Activated CD4-positive, alpha-beta T cell treated with anti-CD3 and anti-CD28 coated beads, Interleukin-2, amount 10 ng/mL, durations not matched to agents 24 days and 14 days (primary cell): ENCODE measurements at regions of chr11 and their contacts with region 1.

Region 1: GRCh38 chr11:73965076-73965860 is 14.4 kb downstream of the DNAJB13 start:
- DNase-seq: no peak
- H3K4me3 Mint-ChIP-seq: peak overlapping the region; percentile 69
- H3K27ac Mint-ChIP-seq: peak overlapping the region; percentile 12
- H3K4me1 Mint-ChIP-seq: peaks cover 28% of the 10 kb centered on the region
- H3K27me3 Mint-ChIP-seq: no peaks in the 10 kb centered on the region

Region 2: GRCh38 chr11:73982969-73983740 is 17.9 kb after region 1 on chr11:
- intact Hi-C with region 1: loop called (anchors 2 kb)
- DNase-seq: peak; percentile 98
- H3K4me3 Mint-ChIP-seq: peak overlapping the region; percentile 95
- H3K27ac Mint-ChIP-seq: peak overlapping the region; percentile 99
- H3K4me1 Mint-ChIP-seq: peaks cover 53% of the 10 kb centered on the region
- H3K27me3 Mint-ChIP-seq: no peaks in the 10 kb centered on the region

Region 3: DNA sequence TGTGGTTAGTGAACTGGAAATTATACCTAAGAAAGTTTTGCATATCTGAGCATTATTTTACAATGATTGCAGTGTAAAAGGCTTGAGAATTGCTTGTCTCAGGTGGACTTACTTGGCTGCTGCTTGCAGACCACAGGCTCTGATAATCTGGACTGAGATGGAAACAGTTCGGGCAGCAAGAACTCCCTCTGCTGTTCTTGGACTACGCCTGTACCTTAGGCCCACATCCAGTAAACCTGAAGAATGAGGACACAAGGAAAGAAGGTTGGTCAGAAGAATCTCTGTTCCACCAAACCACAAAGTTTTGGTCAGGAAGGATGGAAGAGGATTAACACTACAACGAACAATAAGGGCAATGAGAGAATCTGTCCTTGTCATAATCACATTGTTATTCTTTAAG is 125.4 kb after region 1 on chr11:
- intact Hi-C with region 1: loop called (anchors 2 kb)
- DNase-seq: no peak
- H3K4me3 Mint-ChIP-seq: no peak overlapping the region
- H3K27ac Mint-ChIP-seq: no peak overlapping the region
- H3K4me1 Mint-ChIP-seq: no peaks in the 10 kb centered on the region
- H3K27me3 Mint-ChIP-seq: no peaks in the 10 kb centered on the region

Region 4: GRCh38 chr11:74232311-74232950 is 267.2 kb after region 1 on chr11:
- intact Hi-C with region 1: loop called (anchors 10 kb)
- DNase-seq: peak; percentile 67
- H3K4me3 Mint-ChIP-seq: no peak overlapping the region
- H3K27ac Mint-ChIP-seq: no peak overlapping the region
- H3K4me1 Mint-ChIP-seq: peaks cover 7% of the 10 kb centered on the region
- H3K27me3 Mint-ChIP-seq: no peaks in the 10 kb centered on the region

Region 5: GRCh38 chr11:74255741-74256369 is 290.6 kb after region 1 on chr11:
- intact Hi-C with region 1: loop called (anchors 5 kb)
- DNase-seq: peak; percentile 87
- H3K4me3 Mint-ChIP-seq: no peak overlapping the region
- H3K27ac Mint-ChIP-seq: no peak overlapping the region
- H3K4me1 Mint-ChIP-seq: no peaks in the 10 kb centered on the region
- H3K27me3 Mint-ChIP-seq: peaks cover under 1% of the 10 kb centered on the region

Region 6: DNA sequence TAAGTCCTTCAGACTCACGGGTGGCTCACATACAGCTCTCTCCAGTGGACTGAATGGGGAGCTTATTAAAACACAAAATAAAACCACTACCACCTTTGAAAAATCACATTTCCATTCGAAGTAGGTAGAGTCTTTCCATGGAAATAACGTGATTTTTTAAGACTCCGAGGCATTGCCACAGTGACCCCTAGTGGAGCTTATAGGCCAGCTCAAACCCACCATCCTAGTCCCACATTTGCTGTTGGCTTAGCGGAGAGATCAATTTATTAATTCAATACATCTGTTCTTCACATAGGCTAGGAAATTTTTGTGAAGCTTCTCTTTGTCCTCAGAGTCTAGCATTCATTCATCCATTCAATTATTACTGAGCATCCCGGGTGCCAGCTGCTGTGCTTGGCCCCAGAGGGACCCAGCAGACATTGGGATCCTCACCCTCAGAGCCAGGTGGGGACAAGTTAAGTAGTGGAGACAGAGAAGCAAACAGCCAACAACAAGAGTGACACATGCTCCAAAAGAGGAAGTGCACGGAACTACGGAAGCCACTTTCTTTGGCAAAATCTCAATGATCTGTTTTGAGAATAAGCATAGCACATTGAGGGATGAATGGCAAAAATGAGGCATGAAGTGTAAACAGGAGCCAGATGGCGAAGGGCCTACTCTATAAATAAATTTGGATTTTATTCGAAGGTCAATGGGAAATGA is 356.4 kb after region 1 on chr11:
- intact Hi-C with region 1: loop called (anchors 2 kb)
- DNase-seq: peak; percentile 71
- H3K4me3 Mint-ChIP-seq: no peak overlapping the region
- H3K27ac Mint-ChIP-seq: no peak overlapping the region
- H3K4me1 Mint-ChIP-seq: peaks cover 2% of the 10 kb centered on the region
- H3K27me3 Mint-ChIP-seq: peaks cover 23% of the 10 kb centered on the region

Region 7: GRCh38 chr11:74449369-74449931 is 484.2 kb after region 1 on chr11:
- intact Hi-C with region 1: loop called (anchors 1 kb)
- DNase-seq: peak; percentile 83
- H3K4me3 Mint-ChIP-seq: no peak overlapping the region
- H3K27ac Mint-ChIP-seq: no peak overlapping the region
- H3K4me1 Mint-ChIP-seq: peaks cover 7% of the 10 kb centered on the region
- H3K27me3 Mint-ChIP-seq: peaks cover 5% of the 10 kb centered on the region